CD8-positive, alpha-beta T cell (primary cell): ENCODE measurements at regions of chr15 and their contacts with region 1.

Region 1: DNA sequence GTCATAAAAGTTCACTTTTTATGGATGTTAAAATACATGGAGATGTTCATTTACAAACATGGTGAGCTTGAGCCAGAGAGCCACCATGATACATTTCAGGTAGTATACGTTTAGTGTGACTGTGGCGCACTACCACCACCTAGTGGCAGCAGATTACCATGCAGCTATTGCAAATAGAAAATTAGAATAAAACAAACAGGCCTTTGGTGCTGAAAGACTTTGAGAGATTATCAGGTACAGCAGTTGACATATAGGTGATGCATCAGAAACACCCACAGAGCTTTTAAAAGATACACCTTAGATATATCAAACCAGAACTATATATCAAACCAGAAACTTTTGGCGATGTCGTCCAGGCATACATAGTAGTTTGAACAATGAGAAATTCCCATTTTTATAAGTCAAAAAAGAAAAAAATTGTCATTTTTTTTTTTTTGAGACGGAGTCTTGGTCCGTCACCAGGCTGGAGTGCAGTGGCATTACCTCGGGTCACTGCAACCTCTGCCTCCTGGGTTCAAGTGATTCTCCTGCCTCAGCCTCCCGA is 42.0 kb upstream of the ICE2 start:
- DNase-seq: peak; percentile 70 to 87 (median 84)
- ATAC-seq: peak; percentile 88
- H3K4me3 ChIP-seq: no peak overlapping the region
- H3K4me3 Mint-ChIP-seq: peak overlapping the region; percentile 15
- H3K27ac ChIP-seq: no peak overlapping the region
- H3K27ac Mint-ChIP-seq: peak overlapping the region; percentile 84
- H3K4me1 ChIP-seq: peaks cover 9% of the 10 kb centered on the region
- H3K4me1 Mint-ChIP-seq: peaks cover 63% of the 10 kb centered on the region
- H3K27me3 ChIP-seq: no peaks in the 10 kb centered on the region
- H3K27me3 Mint-ChIP-seq: no peaks in the 10 kb centered on the region
- CTCF ChIP-seq: peak; percentile 94

Region 2: GRCh38 chr15:59741274-59741906 is 779.5 kb before region 1 on chr15:
- CTCF ChIA-PET with region 1: no interaction called
- POLR2A ChIA-PET with region 1: no interaction called
- intact Hi-C with region 1: no loop called
- DNase-seq: peak in 2 of 9 experiments; percentile 17 to 33
- ATAC-seq: no peak
- H3K4me3 ChIP-seq: no peak overlapping the region
- H3K4me3 Mint-ChIP-seq: no peak overlapping the region
- H3K27ac ChIP-seq: no peak overlapping the region
- H3K27ac Mint-ChIP-seq: no peak overlapping the region
- H3K4me1 ChIP-seq: no peaks in the 10 kb centered on the region
- H3K4me1 Mint-ChIP-seq: no peaks in the 10 kb centered on the region
- H3K27me3 ChIP-seq: no peaks in the 10 kb centered on the region
- H3K27me3 Mint-ChIP-seq: peaks cover 10% of the 10 kb centered on the region
- CTCF ChIP-seq: no peak

Region 3: GRCh38 chr15:60362321-60363086 is 158.4 kb before region 1 on chr15:
- CTCF ChIA-PET with region 1: interaction called, 35 read pairs
- POLR2A ChIA-PET with region 1: no interaction called
- intact Hi-C with region 1: loop called (anchors 1 to 2 kb)
- DNase-seq: peak in 1 of 9 experiments; percentile 7
- ATAC-seq: peak; percentile 61
- H3K4me3 ChIP-seq: no peak overlapping the region
- H3K4me3 Mint-ChIP-seq: no peak overlapping the region
- H3K27ac ChIP-seq: peak overlapping the region in 1 of 2 experiments; percentile 16
- H3K27ac Mint-ChIP-seq: no peak overlapping the region
- H3K4me1 ChIP-seq: no peaks in the 10 kb centered on the region
- H3K4me1 Mint-ChIP-seq: peaks cover 5% of the 10 kb centered on the region
- H3K27me3 ChIP-seq: no peaks in the 10 kb centered on the region
- H3K27me3 Mint-ChIP-seq: no peaks in the 10 kb centered on the region
- CTCF ChIP-seq: no peak

Region 4: GRCh38 chr15:60541481-60542299 is 20.8 kb after region 1 on chr15:
- CTCF ChIA-PET with region 1: interaction called, 50 read pairs
- POLR2A ChIA-PET with region 1: interaction called, 5 read pairs
- intact Hi-C with region 1: loop called in 1 of 2 experiments (anchors 2 kb)
- DNase-seq: peak in 3 of 9 experiments; percentile 34 to 57 (median 44)
- ATAC-seq: no peak
- H3K4me3 ChIP-seq: no peak overlapping the region
- H3K4me3 Mint-ChIP-seq: peak overlapping the region; percentile 35
- H3K27ac ChIP-seq: peak overlapping the region in 1 of 2 experiments; percentile 50
- H3K27ac Mint-ChIP-seq: peak overlapping the region; percentile 70
- H3K4me1 ChIP-seq: peaks cover 93% of the 10 kb centered on the region
- H3K4me1 Mint-ChIP-seq: peaks cover 94% of the 10 kb centered on the region
- H3K27me3 ChIP-seq: no peaks in the 10 kb centered on the region
- H3K27me3 Mint-ChIP-seq: no peaks in the 10 kb centered on the region
- CTCF ChIP-seq: no peak

Region 5: GRCh38 chr15:60580650-60581376 is 59.9 kb after region 1 on chr15:
- CTCF ChIA-PET with region 1: interaction called, 47 read pairs
- POLR2A ChIA-PET with region 1: interaction called, 14 read pairs
- intact Hi-C with region 1: loop called (anchors 2 to 5 kb)
- DNase-seq: peak in 6 of 9 experiments; percentile 33 to 91 (median 60)
- ATAC-seq: peak; percentile 74
- H3K4me3 ChIP-seq: peak overlapping the region; percentile 18 to 21
- H3K4me3 Mint-ChIP-seq: peak overlapping the region; percentile 74
- H3K27ac ChIP-seq: peak overlapping the region; percentile 35 to 85
- H3K27ac Mint-ChIP-seq: peak overlapping the region; percentile 95
- H3K4me1 ChIP-seq: peaks cover 91% of the 10 kb centered on the region
- H3K4me1 Mint-ChIP-seq: peaks cover 92% of the 10 kb centered on the region
- H3K27me3 ChIP-seq: no peaks in the 10 kb centered on the region
- H3K27me3 Mint-ChIP-seq: no peaks in the 10 kb centered on the region
- CTCF ChIP-seq: no peak

Region 6: DNA sequence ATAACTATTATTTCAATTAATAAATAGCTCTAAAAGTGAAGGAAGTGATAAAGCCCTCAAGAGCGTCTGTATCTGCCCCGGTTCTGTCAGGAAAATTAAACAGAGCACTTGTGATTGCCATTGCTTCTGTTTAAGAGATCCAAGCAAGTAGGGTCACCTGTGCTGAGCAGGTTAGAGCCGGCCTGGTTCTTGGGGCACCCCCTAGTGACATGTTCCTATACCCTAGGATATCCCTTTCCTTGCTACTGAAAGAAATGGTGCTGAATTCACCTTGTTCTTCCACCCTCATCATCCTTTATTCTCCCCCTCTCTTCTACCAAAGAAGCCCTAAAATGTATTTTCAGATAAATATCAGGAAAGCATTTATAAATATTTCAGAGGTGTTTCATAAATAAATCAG is 384.7 kb after region 1 on chr15:
- CTCF ChIA-PET with region 1: interaction called, 14 read pairs
- POLR2A ChIA-PET with region 1: no interaction called
- intact Hi-C with region 1: no loop called
- DNase-seq: peak in 8 of 9 experiments; percentile 2 to 61 (median 34)
- ATAC-seq: peak; percentile 52
- H3K4me3 ChIP-seq: no peak overlapping the region
- H3K4me3 Mint-ChIP-seq: no peak overlapping the region
- H3K27ac ChIP-seq: no peak overlapping the region
- H3K27ac Mint-ChIP-seq: no peak overlapping the region
- H3K4me1 ChIP-seq: peaks cover 32% of the 10 kb centered on the region
- H3K4me1 Mint-ChIP-seq: peaks cover 31% of the 10 kb centered on the region
- H3K27me3 ChIP-seq: no peaks in the 10 kb centered on the region
- H3K27me3 Mint-ChIP-seq: no peaks in the 10 kb centered on the region
- CTCF ChIP-seq: no peak